ENCODE measurements at regions of chr2 and their contacts with region 1.

Region 1: DNA sequence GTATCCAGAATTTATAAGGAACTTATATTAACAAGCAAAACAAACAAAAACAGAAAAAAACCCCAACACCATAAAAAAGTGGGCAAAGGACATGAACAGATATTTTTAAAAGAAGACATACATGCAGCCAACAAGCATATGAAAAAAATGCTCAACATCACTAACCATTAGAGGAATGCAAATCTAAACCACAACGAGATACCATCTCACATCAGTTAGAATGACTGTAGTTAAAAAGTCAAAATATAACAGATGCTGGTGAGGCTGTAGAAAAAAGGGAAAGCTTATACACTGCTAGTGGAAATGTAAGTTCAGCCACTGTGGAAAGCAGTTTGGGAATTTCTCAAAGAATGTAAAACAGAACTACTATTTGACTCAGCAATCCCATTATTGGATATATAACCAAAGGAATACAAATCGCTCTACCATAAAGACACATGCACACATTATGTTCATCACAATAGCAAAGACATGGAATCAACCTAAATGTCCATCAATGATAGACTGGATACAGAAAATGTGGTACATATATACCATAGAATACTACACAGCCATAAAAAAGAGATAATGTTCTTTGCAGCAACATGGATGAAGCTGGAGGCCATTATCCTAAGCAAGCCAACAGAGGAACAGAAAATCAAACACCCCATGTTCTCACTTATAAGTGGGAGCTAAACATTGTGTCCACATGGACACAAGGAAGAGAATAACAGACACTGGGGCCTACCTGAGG is 25.3 kb downstream of the PREPL start:
- DNase-seq: peak; percentile 41
- ATAC-seq: 0 out of 2 replicates have a peak, but pooled peaks have one; percentile 32
- H3K4me3 ChIP-seq: no peak overlapping the region
- H3K27ac ChIP-seq: no peak overlapping the region
- H3K4me1 ChIP-seq: peaks cover 6% of the 10 kb centered on the region
- H3K27me3 ChIP-seq: no peaks in the 10 kb centered on the region
- CTCF ChIP-seq: no peak
- POLR2A ChIP-seq: no peak
- RAD21 ChIP-seq: no peak

Region 2: DNA sequence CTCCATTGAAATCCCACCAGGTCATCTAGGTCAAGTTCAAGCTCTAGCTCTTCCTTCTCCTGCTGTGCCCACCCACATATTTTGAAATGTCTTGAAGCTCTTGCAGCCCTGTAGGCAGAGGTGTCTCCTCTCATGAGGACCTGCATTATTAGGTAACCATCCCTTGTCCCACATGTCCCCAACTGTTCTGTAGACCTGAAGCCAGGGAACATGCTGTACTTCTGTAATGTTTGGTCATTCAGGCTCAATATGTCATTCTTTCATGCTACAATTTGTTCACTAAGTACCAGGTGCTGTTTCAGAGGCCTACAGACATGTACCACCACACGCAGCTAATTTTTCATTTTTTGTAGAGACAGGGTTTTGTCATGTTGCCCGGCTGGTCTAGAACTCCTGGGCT is 38.5 kb before region 1 on chr2:
- CTCF ChIA-PET with region 1: no interaction called
- POLR2A ChIA-PET with region 1: no interaction called
- dilution Hi-C with region 1: no loop called
- in situ Hi-C with region 1: no loop called
- intact Hi-C with region 1: no loop called
- DNase-seq: no peak
- ATAC-seq: no peak
- H3K4me3 ChIP-seq: no peak overlapping the region
- H3K27ac ChIP-seq: no peak overlapping the region
- H3K4me1 ChIP-seq: no peaks in the 10 kb centered on the region
- H3K27me3 ChIP-seq: peaks cover 22% of the 10 kb centered on the region
- CTCF ChIP-seq: no peak
- POLR2A ChIP-seq: no peak
- RAD21 ChIP-seq: no peak

Region 3: GRCh38 chr2:44310287-44310686 is 25.7 kb before region 1 on chr2:
- CTCF ChIA-PET with region 1: no interaction called
- POLR2A ChIA-PET with region 1: no interaction called
- dilution Hi-C with region 1: no loop called
- in situ Hi-C with region 1: no loop called
- intact Hi-C with region 1: loop called (anchors 1 kb)
- DNase-seq: no peak
- ATAC-seq: no peak
- H3K4me3 ChIP-seq: no peak overlapping the region
- H3K27ac ChIP-seq: no peak overlapping the region
- H3K4me1 ChIP-seq: no peaks in the 10 kb centered on the region
- H3K27me3 ChIP-seq: no peaks in the 10 kb centered on the region
- CTCF ChIP-seq: no peak
- POLR2A ChIP-seq: no peak
- RAD21 ChIP-seq: no peak